B cell (primary cell): ENCODE measurements at regions of chr6 and their contacts with region 1.

Region 1: DNA sequence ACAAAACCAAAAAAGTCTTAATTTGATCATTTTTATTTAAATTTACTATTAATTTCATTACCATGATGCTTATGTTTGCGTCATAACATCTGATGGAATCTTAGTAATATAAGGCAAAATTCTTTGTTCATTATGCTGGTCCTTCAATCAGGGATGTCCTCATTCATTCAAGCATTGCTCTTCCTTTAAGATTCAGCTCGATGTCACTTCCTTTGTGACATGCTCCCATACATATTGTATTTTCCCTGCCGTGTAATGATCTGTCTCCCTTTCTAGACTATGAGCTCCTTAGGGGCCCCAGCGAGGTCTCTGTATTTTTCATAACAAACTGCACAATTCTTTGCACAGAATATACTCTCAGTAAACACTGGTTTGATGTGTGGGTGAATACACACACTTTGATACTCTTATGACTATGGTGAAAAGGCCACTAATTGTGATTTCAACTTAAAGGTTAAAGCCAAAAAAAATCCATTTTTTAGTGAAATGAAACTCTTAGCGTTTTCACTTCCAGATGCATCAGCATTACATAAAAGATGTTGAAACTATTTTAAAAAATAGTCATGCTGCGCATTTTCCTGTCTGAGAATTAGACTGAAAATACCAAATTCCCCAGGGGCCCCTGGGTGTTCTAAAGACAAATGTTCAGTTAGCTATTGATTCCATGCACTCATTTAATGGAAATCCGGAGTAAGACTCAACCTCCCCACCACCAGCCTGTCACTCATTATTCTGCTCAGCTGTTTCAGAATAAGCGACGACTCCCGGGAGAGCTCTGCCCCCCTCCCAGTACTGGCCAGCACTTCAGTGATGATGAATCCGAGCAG is 169.7 kb downstream of the ATXN1 start:
- DNase-seq: peak; percentile 53
- ATAC-seq: peak; percentile 72
- H3K4me3 ChIP-seq: no peak overlapping the region
- H3K4me3 Mint-ChIP-seq: peak overlapping the region; percentile 72
- H3K27ac ChIP-seq: peak overlapping the region; percentile 7 to 56
- H3K27ac Mint-ChIP-seq: peak overlapping the region; percentile 60
- H3K4me1 ChIP-seq: peaks cover 19 to 30% of the 10 kb centered on the region in 2 donors
- H3K4me1 Mint-ChIP-seq: peaks cover 55% of the 10 kb centered on the region
- H3K27me3 ChIP-seq: no peaks in the 10 kb centered on the region
- H3K27me3 Mint-ChIP-seq: no peaks in the 10 kb centered on the region
- CTCF ChIP-seq: no peak

Region 2: DNA sequence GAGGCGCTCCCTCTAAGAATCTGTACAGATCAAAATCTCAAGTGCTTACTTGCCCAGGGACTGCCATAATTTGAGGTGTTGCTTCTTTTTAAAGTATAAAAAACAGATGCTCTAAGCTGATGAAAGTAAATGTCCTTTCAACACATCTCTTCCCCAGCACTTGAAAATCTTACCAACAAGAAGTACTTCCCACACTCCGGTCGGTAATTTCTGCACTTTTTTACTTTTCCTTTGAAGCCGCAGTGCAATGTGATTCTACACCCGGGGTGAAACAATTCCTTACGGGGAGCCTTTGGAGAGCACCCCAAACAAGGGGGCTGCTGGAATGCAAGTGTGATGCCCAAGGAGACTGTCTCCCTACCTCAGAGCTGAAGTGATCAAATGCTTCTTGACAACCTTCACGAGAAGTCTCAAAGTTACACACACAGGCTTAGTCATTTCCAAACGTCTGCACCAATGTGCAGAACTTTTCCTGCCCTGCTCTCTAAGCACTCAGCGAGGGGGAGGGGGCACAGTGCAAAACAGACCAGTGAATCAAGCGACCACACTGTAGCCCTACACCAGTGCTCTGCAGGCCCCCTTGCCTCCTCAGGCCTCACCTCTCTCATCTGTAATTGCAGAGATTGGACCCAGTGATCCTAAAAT is 112.9 kb after region 1 on chr6:
- CTCF ChIA-PET with region 1: no interaction called
- POLR2A ChIA-PET with region 1: interaction called, 3 read pairs
- intact Hi-C with region 1: loop called (anchors 10 kb)
- DNase-seq: no peak
- ATAC-seq: no peak
- H3K4me3 ChIP-seq: no peak overlapping the region
- H3K4me3 Mint-ChIP-seq: peak overlapping the region; percentile 23
- H3K27ac ChIP-seq: no peak overlapping the region
- H3K27ac Mint-ChIP-seq: no peak overlapping the region
- H3K4me1 ChIP-seq: peaks cover 18 to 19% of the 10 kb centered on the region in 2 donors
- H3K4me1 Mint-ChIP-seq: peaks cover 55% of the 10 kb centered on the region
- H3K27me3 ChIP-seq: peaks cover 0 to 10% (median under 1%) of the 10 kb centered on the region in 4 experiments
- H3K27me3 Mint-ChIP-seq: no peaks in the 10 kb centered on the region
- CTCF ChIP-seq: no peak